GM12878 (cell line): ENCODE measurements at regions of chr7 and their contacts with region 1.

Region 1: GRCh38 chr7:123865517-123866117 is 20.6 kb downstream of the HYAL4 start:
- DNase-seq: peak; percentile 21
- ATAC-seq: peak; percentile 93
- H3K4me3 ChIP-seq: no peak overlapping the region
- H3K27ac ChIP-seq: no peak overlapping the region
- H3K4me1 ChIP-seq: no peaks in the 10 kb centered on the region
- H3K27me3 ChIP-seq: no peaks in the 10 kb centered on the region
- CTCF ChIP-seq: peak; percentile 54 to 57 (median 57); a peak in 5 of 6 replicates
- EP300 ChIP-seq: no peak
- POLR2A ChIP-seq: no peak
- RAD21 ChIP-seq: peak; percentile 73

Region 2: GRCh38 chr7:123635551-123636359 is 229.9 kb before region 1 on chr7:
- CTCF ChIA-PET with region 1: interaction called, 9 read pairs
- POLR2A ChIA-PET with region 1: no interaction called
- RAD21 ChIA-PET with region 1: interaction called, 5 read pairs
- SMC1A ChIA-PET with region 1: interaction called, 10 read pairs
- in situ Hi-C with region 1: no loop called
- intact Hi-C with region 1: loop called (anchors 5 kb)
- DNase-seq: no peak
- ATAC-seq: 0 out of 3 replicates have a peak, but pooled peaks have one; percentile 49
- H3K4me3 ChIP-seq: no peak overlapping the region
- H3K27ac ChIP-seq: no peak overlapping the region
- H3K4me1 ChIP-seq: no peaks in the 10 kb centered on the region
- H3K27me3 ChIP-seq: no peaks in the 10 kb centered on the region
- CTCF ChIP-seq: peak; percentile 35 to 43 (median 40); a peak in 5 of 6 replicates
- EP300 ChIP-seq: no peak
- POLR2A ChIP-seq: no peak
- RAD21 ChIP-seq: peak; percentile 67

Region 3: DNA sequence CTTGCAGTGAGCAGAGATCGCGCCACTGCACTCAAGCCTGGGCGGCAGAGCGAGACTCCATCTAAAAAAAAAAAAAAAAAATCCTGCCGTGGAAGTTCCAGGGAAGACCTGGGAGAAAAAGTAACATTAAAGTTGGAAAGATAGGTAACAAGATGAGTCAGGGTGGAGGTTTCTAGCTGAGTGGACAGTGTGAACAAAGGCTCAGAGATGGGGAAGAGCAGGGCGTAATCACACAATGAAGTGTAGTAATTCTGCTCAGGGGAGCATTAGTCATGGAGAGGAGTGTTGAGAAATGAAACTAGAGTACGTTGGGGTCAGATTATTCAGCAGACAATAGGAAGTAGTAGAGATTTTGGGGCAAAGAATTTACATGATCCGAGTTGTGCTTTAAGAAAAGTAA is 95.2 kb before region 1 on chr7:
- CTCF ChIA-PET with region 1: interaction called, 21 read pairs
- POLR2A ChIA-PET with region 1: no interaction called
- RAD21 ChIA-PET with region 1: interaction called, 11 read pairs
- SMC1A ChIA-PET with region 1: interaction called, 4 read pairs
- in situ Hi-C with region 1: no loop called
- intact Hi-C with region 1: no loop called
- DNase-seq: no peak
- ATAC-seq: peak; percentile 99
- H3K4me3 ChIP-seq: no peak overlapping the region
- H3K27ac ChIP-seq: no peak overlapping the region; the same call in 1 of the 2 replicates
- H3K4me1 ChIP-seq: no peaks in the 10 kb centered on the region
- H3K27me3 ChIP-seq: no peaks in the 10 kb centered on the region
- CTCF ChIP-seq: no peak
- EP300 ChIP-seq: peak in 1 of 2 experiments; percentile 47; a peak in 1 of 4 replicates
- POLR2A ChIP-seq: no peak
- RAD21 ChIP-seq: no peak

Region 4: GRCh38 chr7:123797673-123798527 is 67.7 kb before region 1 on chr7:
- CTCF ChIA-PET with region 1: interaction called, 208 read pairs
- POLR2A ChIA-PET with region 1: interaction called, 10 read pairs
- RAD21 ChIA-PET with region 1: interaction called, 115 read pairs
- SMC1A ChIA-PET with region 1: interaction called, 151 read pairs
- in situ Hi-C with region 1: no loop called
- intact Hi-C with region 1: loop called (anchors 1 kb)
- DNase-seq: no peak
- ATAC-seq: peak; percentile 78
- H3K4me3 ChIP-seq: no peak overlapping the region
- H3K27ac ChIP-seq: no peak overlapping the region
- H3K4me1 ChIP-seq: no peaks in the 10 kb centered on the region
- H3K27me3 ChIP-seq: no peaks in the 10 kb centered on the region
- CTCF ChIP-seq: peak in 2 of 3 experiments; percentile 28 to 59; a peak in 3 of 6 replicates
- EP300 ChIP-seq: no peak
- POLR2A ChIP-seq: no peak
- RAD21 ChIP-seq: peak; percentile 88

Region 5: GRCh38 chr7:123816916-123817315 is 48.7 kb before region 1 on chr7:
- CTCF ChIA-PET with region 1: interaction called, 4 read pairs
- POLR2A ChIA-PET with region 1: no interaction called
- RAD21 ChIA-PET with region 1: no interaction called
- SMC1A ChIA-PET with region 1: interaction called, 15 read pairs
- in situ Hi-C with region 1: no loop called
- intact Hi-C with region 1: no loop called
- DNase-seq: no peak
- ATAC-seq: no peak
- H3K4me3 ChIP-seq: no peak overlapping the region
- H3K27ac ChIP-seq: no peak overlapping the region
- H3K4me1 ChIP-seq: no peaks in the 10 kb centered on the region
- H3K27me3 ChIP-seq: no peaks in the 10 kb centered on the region
- CTCF ChIP-seq: no peak
- EP300 ChIP-seq: no peak
- POLR2A ChIP-seq: no peak
- RAD21 ChIP-seq: no peak

Region 6: GRCh38 chr7:123846216-123846891 is 19.3 kb before region 1 on chr7:
- CTCF ChIA-PET with region 1: interaction called, 21 read pairs
- POLR2A ChIA-PET with region 1: no interaction called
- RAD21 ChIA-PET with region 1: interaction called, 5 read pairs
- SMC1A ChIA-PET with region 1: interaction called, 19 read pairs
- in situ Hi-C with region 1: no loop called
- intact Hi-C with region 1: no loop called
- DNase-seq: peak; percentile 7
- ATAC-seq: peak; percentile 93
- H3K4me3 ChIP-seq: no peak overlapping the region
- H3K27ac ChIP-seq: no peak overlapping the region
- H3K4me1 ChIP-seq: no peaks in the 10 kb centered on the region
- H3K27me3 ChIP-seq: no peaks in the 10 kb centered on the region
- CTCF ChIP-seq: no peak
- EP300 ChIP-seq: no peak
- POLR2A ChIP-seq: no peak
- RAD21 ChIP-seq: no peak